ENCODE measurements at regions of chr5 and their contacts with region 1.

Region 1: GRCh38 chr5:72847989-72848473 is 31.6 kb downstream of the TNPO1 start:
- DNase-seq: peak; percentile 90
- ATAC-seq: peak; percentile 75
- H3K4me3 ChIP-seq: peak overlapping the region; percentile 75 to 96 (median 91)
- H3K4me3 Mint-ChIP-seq: peak overlapping the region; percentile 99
- H3K27ac ChIP-seq: peak overlapping the region; percentile 83 to 89
- H3K27ac Mint-ChIP-seq: peak overlapping the region; percentile 99
- H3K4me1 ChIP-seq: peaks cover 18 to 40% of the 10 kb centered on the region in 2 donors
- H3K4me1 Mint-ChIP-seq: peaks cover 54% of the 10 kb centered on the region
- H3K27me3 ChIP-seq: no peaks in the 10 kb centered on the region
- H3K27me3 Mint-ChIP-seq: no peaks in the 10 kb centered on the region
- CTCF ChIP-seq: no peak

Region 2: GRCh38 chr5:72319976-72320752 is 527.9 kb before region 1 on chr5 and contains the starts of genes MRPS27 and PTCD2:
- CTCF ChIA-PET with region 1: no interaction called
- POLR2A ChIA-PET with region 1: no interaction called
- intact Hi-C with region 1: loop called (anchors 1 kb)
- DNase-seq: peak; percentile 97
- ATAC-seq: peak; percentile 99
- H3K4me3 ChIP-seq: peak within 1 kb of the TSS; percentile 61 to 98 (median 81)
- H3K4me3 Mint-ChIP-seq: peak within 1 kb of the TSS; percentile 91
- H3K27ac ChIP-seq: peak within 1 kb of the TSS; percentile 47 to 60
- H3K27ac Mint-ChIP-seq: peak within 1 kb of the TSS; percentile 95
- H3K4me1 ChIP-seq: peaks cover 8 to 13% of the 10 kb centered on the region in 2 donors
- H3K4me1 Mint-ChIP-seq: peaks cover 29% of the 10 kb centered on the region
- H3K27me3 ChIP-seq: no peaks in the 10 kb centered on the region
- H3K27me3 Mint-ChIP-seq: no peaks in the 10 kb centered on the region
- CTCF ChIP-seq: no peak
- total RNA-seq, gene MRPS27: 52.8 and 58.3 TPM in 2 replicates
- total RNA-seq, gene PTCD2: 10.1 and 10.5 TPM in 2 replicates

Region 3: DNA sequence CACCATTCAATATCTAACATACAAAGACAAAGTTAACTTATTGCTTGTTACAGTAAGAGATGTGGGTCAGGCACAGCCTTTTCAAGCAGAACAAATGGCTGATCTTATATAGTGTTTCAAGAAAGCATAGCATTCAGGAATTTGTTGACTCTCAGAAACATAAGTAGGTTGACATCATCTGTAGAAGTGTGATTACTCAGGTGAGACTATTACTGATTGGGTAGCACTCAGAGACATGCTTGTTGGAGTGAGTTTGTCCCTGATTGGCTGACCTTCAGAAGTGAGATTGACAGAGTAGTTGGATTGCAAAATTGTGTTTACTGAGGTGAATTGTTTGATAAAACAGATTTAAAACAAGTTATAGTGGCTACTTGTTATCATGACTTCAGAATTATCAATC is 62.2 kb before region 1 on chr5:
- CTCF ChIA-PET with region 1: no interaction called
- POLR2A ChIA-PET with region 1: no interaction called
- intact Hi-C with region 1: no loop called
- DNase-seq: no peak
- ATAC-seq: no peak
- H3K4me3 ChIP-seq: no peak overlapping the region
- H3K4me3 Mint-ChIP-seq: no peak overlapping the region
- H3K27ac ChIP-seq: no peak overlapping the region
- H3K27ac Mint-ChIP-seq: no peak overlapping the region
- H3K4me1 ChIP-seq: no peaks in the 10 kb centered on the region
- H3K4me1 Mint-ChIP-seq: no peaks in the 10 kb centered on the region
- H3K27me3 ChIP-seq: peaks cover 0 to 4% (median 0%) of the 10 kb centered on the region in 4 experiments
- H3K27me3 Mint-ChIP-seq: peaks cover 10% of the 10 kb centered on the region
- CTCF ChIP-seq: no peak

Region 4: DNA sequence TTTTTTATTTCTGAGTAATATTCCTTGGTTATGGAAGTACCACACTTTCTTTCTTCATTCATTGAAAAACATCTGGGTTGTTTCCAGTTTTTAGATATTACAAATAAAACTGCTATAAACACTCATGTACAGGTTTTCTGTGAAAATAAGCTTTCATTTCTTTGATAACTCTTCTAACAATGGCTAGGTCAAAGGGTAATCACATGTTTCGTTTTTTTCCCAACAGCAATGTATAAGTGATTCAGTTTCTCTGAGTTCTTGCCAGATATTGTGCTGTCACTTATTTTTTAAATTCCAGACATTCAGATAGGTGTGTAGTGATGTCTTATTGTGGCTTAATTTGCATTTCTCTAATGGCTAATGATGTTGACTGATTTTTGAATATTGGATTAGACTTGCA is 48.3 kb before region 1 on chr5:
- CTCF ChIA-PET with region 1: no interaction called
- POLR2A ChIA-PET with region 1: no interaction called
- intact Hi-C with region 1: no loop called
- DNase-seq: no peak
- ATAC-seq: no peak
- H3K4me3 ChIP-seq: no peak overlapping the region
- H3K4me3 Mint-ChIP-seq: no peak overlapping the region
- H3K27ac ChIP-seq: no peak overlapping the region
- H3K27ac Mint-ChIP-seq: no peak overlapping the region
- H3K4me1 ChIP-seq: no peaks in the 10 kb centered on the region
- H3K4me1 Mint-ChIP-seq: no peaks in the 10 kb centered on the region
- H3K27me3 ChIP-seq: peaks cover 0 to 4% (median under 1%) of the 10 kb centered on the region in 4 experiments
- H3K27me3 Mint-ChIP-seq: peaks cover 4% of the 10 kb centered on the region
- CTCF ChIP-seq: no peak

Region 5: DNA sequence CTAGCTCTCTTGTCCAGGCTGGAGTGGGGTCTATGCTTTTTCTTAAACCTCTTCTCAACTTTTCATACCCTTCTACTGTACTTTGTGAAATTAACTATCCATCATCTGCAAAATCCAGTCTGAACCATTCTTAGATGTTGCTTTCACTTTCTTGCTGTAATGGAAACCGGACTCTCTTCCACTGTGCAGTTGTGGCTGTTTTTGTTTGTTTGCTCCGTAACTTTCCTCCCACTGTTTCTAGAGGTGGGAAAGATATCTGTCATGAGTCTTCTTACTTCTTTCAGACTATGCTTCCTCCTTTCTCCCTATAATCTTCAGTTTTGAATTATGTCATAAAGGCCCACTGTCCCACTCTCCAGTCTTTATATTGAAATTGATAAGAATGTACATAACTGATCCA is 25.1 kb before region 1 on chr5:
- CTCF ChIA-PET with region 1: interaction called, 39 read pairs
- POLR2A ChIA-PET with region 1: interaction called, 14 read pairs
- intact Hi-C with region 1: loop called (anchors 2 kb)
- DNase-seq: no peak
- ATAC-seq: no peak
- H3K4me3 ChIP-seq: no peak overlapping the region
- H3K4me3 Mint-ChIP-seq: no peak overlapping the region
- H3K27ac ChIP-seq: no peak overlapping the region
- H3K27ac Mint-ChIP-seq: no peak overlapping the region
- H3K4me1 ChIP-seq: peaks cover 5 to 9% of the 10 kb centered on the region in 2 donors
- H3K4me1 Mint-ChIP-seq: peaks cover 16% of the 10 kb centered on the region
- H3K27me3 ChIP-seq: no peaks in the 10 kb centered on the region
- H3K27me3 Mint-ChIP-seq: no peaks in the 10 kb centered on the region
- CTCF ChIP-seq: no peak

Region 6: GRCh38 chr5:74684900-74685851 is 1837.1 kb after region 1 on chr5 and contains the start of gene HEXB:
- CTCF ChIA-PET with region 1: no interaction called
- POLR2A ChIA-PET with region 1: no interaction called
- intact Hi-C with region 1: loop called (anchors 10 kb)
- DNase-seq: peak; percentile 80
- ATAC-seq: peak; percentile 85
- H3K4me3 ChIP-seq: peak within 1 kb of the TSS; percentile 80 to 98 (median 88)
- H3K4me3 Mint-ChIP-seq: peak within 1 kb of the TSS; percentile 87
- H3K27ac ChIP-seq: peak within 1 kb of the TSS; percentile 42 to 67
- H3K27ac Mint-ChIP-seq: peak within 1 kb of the TSS; percentile 75
- H3K4me1 ChIP-seq: peaks cover 12 to 16% of the 10 kb centered on the region in 2 donors
- H3K4me1 Mint-ChIP-seq: peaks cover 20% of the 10 kb centered on the region
- H3K27me3 ChIP-seq: no peaks in the 10 kb centered on the region
- H3K27me3 Mint-ChIP-seq: peaks cover 2% of the 10 kb centered on the region
- CTCF ChIP-seq: no peak
- total RNA-seq, gene HEXB: 47.1 and 55.3 TPM in 2 replicates